Colonic mucosa (tissue), 4 donors: ENCODE measurements at regions of chr14 and their contacts with region 1.

Region 1: DNA sequence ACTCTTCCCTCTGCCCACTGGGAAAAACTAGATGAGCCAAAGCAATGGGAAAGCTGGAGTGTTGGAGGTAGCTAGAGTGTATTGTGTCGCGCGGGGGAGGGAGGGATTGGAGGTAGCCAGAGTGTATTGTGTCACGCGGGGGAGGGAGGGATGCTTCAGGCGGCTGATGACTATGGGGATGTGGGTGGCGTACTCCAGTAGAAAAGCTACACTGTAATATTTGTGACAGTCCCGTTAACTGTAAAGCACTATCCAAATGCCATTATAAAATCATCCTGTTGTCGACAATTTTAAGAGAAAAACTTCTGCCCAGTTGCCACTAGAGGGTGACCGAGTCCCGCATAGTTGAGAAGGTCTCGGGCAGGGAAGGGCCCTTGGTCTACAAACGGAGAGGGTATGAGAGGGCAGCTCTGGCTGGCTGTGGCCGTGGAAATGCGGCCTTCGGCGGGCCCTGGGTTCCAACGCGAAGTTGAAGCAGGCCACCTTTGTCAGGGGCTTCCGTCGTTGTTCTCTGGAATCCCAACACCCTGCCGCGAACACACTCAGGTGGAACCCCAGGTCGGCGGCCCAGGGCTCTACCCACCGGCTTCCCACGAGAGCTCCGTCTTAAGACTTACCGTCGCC is 15.1 kb upstream of the PLEK2 start:
- DNase-seq: peak; percentile 83
- H3K4me3 ChIP-seq: no peak overlapping the region
- H3K27ac ChIP-seq: no peak overlapping the region
- H3K4me1 ChIP-seq: peaks cover 9% of the 10 kb centered on the region
- H3K27me3 ChIP-seq: no peaks in the 10 kb centered on the region
- CTCF ChIP-seq: peak; percentile 68

Region 2: GRCh38 chr14:67571272-67571850 is 144.3 kb after region 1 on chr14:
- intact Hi-C with region 1: loop called (anchors 5 kb)
- DNase-seq: peak; percentile 71
- H3K4me3 ChIP-seq: no peak overlapping the region
- H3K27ac ChIP-seq: no peak overlapping the region
- H3K4me1 ChIP-seq: no peaks in the 10 kb centered on the region
- H3K27me3 ChIP-seq: no peaks in the 10 kb centered on the region
- CTCF ChIP-seq: peak; percentile 78

Region 3: GRCh38 chr14:67666750-67667449 is 239.8 kb after region 1 on chr14:
- intact Hi-C with region 1: loop called (anchors 10 kb)
- DNase-seq: peak; percentile 30
- H3K4me3 ChIP-seq: no peak overlapping the region
- H3K27ac ChIP-seq: no peak overlapping the region
- H3K4me1 ChIP-seq: peaks cover 3% of the 10 kb centered on the region
- H3K27me3 ChIP-seq: no peaks in the 10 kb centered on the region
- CTCF ChIP-seq: peak; percentile 59

Region 4: DNA sequence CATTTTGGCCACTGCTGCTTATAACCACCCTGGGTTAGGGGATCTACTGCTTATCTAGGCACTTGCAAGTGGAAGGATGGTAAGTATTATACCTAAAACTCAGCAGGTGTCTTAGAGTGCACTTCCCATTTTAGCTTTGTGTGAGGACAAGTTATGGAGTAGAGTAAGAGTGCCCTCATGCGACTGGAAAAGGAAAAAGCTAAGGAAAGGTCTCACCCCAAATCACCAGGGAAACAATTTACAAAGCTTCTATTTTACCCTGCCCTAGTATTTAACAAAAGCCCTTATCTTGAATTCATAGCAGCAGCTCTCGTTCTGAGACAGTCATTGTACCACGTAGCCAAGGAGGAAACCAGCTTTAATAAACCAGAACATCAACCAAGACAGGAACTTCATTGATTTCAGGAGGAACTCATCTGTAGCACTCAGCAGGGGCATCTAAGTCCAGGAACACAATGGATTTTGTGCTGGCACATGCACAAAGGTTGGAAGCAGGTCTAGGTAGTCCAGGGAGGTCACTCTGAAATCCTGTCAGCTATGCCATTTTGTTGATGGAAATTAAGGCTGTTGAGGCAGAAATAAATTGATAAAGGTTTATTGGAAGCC is 277.5 kb after region 1 on chr14:
- intact Hi-C with region 1: loop called (anchors 10 kb)
- DNase-seq: peak; percentile 40
- H3K4me3 ChIP-seq: no peak overlapping the region
- H3K27ac ChIP-seq: no peak overlapping the region
- H3K4me1 ChIP-seq: no peaks in the 10 kb centered on the region
- H3K27me3 ChIP-seq: no peaks in the 10 kb centered on the region
- CTCF ChIP-seq: peak; percentile 52